ENCODE measurements at regions of chr6 and their contacts with region 1.

Region 1: DNA sequence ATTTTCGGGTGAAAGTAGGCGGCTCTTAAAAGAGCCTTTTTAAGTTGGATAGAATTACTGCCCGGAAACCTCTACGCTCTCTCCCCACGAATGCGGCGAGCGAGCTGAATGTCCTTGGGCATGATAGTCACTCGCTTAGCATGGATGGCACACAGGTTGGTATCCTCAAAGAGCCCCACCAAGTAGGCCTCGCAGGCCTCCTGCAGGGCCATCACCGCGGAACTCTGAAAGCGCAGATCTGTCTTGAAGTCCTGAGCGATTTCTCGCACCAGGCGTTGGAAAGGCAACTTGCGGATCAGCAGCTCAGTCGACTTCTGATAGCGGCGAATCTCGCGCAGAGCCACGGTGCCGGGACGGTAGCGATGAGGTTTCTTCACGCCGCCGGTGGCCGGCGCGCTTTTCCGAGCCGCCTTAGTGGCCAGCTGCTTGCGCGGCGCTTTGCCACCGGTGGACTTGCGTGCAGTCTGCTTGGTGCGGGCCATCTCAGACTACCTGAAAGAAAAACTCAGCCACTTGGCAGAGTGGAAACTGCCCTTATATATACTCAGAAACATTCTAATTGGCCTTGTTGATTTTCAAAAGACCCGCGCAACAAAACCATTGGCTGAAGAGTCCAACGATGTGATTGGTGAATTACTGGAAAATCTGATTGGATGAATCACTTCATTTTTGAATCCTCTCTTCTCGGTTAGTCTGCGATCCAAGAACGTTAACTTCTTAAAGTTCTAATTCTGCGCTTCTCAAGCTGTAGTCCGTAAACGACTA is 93.9 kb upstream of the BTN3A2 start:
- DNase-seq: peak; percentile 87
- H3K4me3 Mint-ChIP-seq: no peak overlapping the region
- H3K27ac Mint-ChIP-seq: no peak overlapping the region
- H3K4me1 Mint-ChIP-seq: peaks cover 35% of the 10 kb centered on the region
- H3K27me3 Mint-ChIP-seq: no peaks in the 10 kb centered on the region

Region 2: DNA sequence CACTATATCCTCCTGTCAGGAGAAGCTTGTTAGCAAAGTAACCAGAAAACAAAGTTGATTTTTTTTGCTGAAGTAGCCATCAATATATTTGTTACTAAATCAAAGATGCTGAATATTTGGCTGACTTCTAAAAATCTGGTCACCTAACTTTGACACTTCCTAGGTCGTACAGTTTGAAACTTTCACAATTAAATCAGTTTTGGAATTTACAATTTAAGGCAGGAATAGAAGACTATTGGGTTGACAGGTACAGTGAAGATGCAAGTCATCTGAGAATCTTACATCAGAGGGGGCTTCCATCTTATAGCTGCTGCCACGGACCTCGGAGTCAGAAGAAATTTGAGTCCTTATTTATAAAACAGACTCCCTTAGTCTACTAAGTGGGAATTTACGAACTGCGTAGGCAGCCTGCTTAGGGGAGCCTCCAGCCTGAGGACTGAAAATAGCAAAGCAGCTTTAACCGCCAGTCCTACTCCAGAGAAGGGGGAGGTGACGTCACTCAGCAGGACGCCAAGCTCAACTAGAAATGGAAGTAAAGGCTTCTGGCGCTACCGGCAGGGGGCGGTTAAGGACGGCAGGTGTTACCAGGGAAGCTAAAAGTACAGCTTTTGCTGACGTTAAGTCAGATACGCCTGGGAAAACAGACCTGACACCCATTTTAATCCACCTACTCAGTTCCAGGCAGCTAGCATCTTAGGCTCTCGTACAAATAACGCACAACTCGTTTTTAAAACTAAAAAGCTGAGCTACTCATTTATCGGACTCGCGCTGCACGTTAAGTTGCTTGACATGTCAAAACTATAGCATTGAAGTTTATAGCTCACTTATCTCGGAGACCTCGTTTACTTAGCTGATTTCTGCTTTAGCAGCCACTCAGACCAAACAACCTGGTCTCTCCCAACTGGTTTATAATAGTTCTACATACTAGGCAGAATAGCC is 244.9 kb before region 1 on chr6:
- CTCF ChIA-PET with region 1: no interaction called
- POLR2A ChIA-PET with region 1: interaction called, 81 read pairs
- DNase-seq: peak; percentile 94
- H3K4me3 Mint-ChIP-seq: peak overlapping the region; percentile 75
- H3K27ac Mint-ChIP-seq: peak overlapping the region; percentile 100
- H3K4me1 Mint-ChIP-seq: peaks cover 84% of the 10 kb centered on the region
- H3K27me3 Mint-ChIP-seq: peaks cover 2% of the 10 kb centered on the region

Region 3: GRCh38 chr6:26122793-26123674 is 148.1 kb before region 1 on chr6:
- CTCF ChIA-PET with region 1: no interaction called
- POLR2A ChIA-PET with region 1: interaction called, 161 read pairs
- DNase-seq: peak; percentile 95
- H3K4me3 Mint-ChIP-seq: peak overlapping the region; percentile 97
- H3K27ac Mint-ChIP-seq: peak overlapping the region; percentile 100
- H3K4me1 Mint-ChIP-seq: peaks cover 40% of the 10 kb centered on the region
- H3K27me3 Mint-ChIP-seq: no peaks in the 10 kb centered on the region

Region 4: DNA sequence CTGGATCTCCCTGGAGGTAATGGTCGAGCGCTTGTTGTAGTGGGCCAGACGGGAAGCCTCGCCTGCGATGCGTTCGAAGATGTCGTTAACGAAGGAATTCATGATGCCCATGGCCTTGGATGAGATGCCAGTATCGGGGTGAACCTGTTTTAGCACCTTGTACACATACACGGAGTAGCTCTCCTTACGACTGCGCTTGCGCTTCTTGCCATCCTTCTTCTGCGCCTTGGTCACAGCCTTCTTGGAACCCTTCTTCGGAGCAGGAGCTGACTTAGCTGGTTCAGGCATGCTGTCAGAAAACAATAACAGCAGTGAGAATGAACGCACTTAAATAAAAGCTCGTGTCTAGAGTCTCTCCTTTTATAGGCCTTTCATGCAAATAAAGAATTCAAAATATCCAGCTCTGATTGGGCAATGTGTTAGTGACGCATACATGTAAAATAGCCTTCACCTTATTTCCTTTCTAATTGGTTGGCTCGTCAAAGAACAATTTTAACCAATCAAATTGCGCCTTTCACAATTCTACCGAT is 54.7 kb before region 1 on chr6:
- CTCF ChIA-PET with region 1: interaction called, 8 read pairs
- POLR2A ChIA-PET with region 1: interaction called, 326 read pairs
- DNase-seq: peak; percentile 90
- H3K4me3 Mint-ChIP-seq: no peak overlapping the region
- H3K27ac Mint-ChIP-seq: no peak overlapping the region
- H3K4me1 Mint-ChIP-seq: peaks cover 28% of the 10 kb centered on the region
- H3K27me3 Mint-ChIP-seq: no peaks in the 10 kb centered on the region

Region 5: GRCh38 chr6:26304797-26305640 is 33.9 kb after region 1 on chr6:
- CTCF ChIA-PET with region 1: interaction called, 4 read pairs
- POLR2A ChIA-PET with region 1: interaction called, 55 read pairs
- DNase-seq: peak; percentile 67
- H3K4me3 Mint-ChIP-seq: peak overlapping the region; percentile 79
- H3K27ac Mint-ChIP-seq: peak overlapping the region; percentile 90
- H3K4me1 Mint-ChIP-seq: peaks cover 49% of the 10 kb centered on the region
- H3K27me3 Mint-ChIP-seq: no peaks in the 10 kb centered on the region

Region 6: DNA sequence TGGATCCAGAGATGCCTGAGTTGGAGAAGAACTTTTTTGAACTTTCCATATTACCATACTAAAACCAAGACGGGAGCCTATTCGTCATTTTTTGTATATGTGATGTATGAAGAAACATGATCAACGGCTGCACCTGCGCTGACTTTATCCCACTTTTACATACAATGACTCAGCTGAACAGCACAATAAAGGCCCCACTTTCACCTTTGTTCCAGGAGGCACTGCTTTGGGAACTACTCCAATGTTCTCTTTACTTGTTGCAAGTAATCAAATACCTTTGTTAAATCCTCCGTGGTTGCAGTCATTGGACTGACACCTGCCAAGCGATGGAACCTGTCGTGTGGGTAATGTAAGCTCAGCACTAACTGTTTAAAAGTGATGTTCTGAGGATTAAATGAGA is 76.6 kb after region 1 on chr6:
- CTCF ChIA-PET with region 1: no interaction called
- POLR2A ChIA-PET with region 1: no interaction called
- DNase-seq: no peak
- H3K4me3 Mint-ChIP-seq: no peak overlapping the region
- H3K27ac Mint-ChIP-seq: no peak overlapping the region
- H3K4me1 Mint-ChIP-seq: peaks cover 5% of the 10 kb centered on the region
- H3K27me3 Mint-ChIP-seq: peaks cover 17% of the 10 kb centered on the region

Region 7: GRCh38 chr6:26363882-26364701 is 93.0 kb after region 1 on chr6:
- CTCF ChIA-PET with region 1: no interaction called
- POLR2A ChIA-PET with region 1: no interaction called
- DNase-seq: no peak
- H3K4me3 Mint-ChIP-seq: no peak overlapping the region
- H3K27ac Mint-ChIP-seq: no peak overlapping the region
- H3K4me1 Mint-ChIP-seq: peaks cover 57% of the 10 kb centered on the region
- H3K27me3 Mint-ChIP-seq: no peaks in the 10 kb centered on the region

Region 8: DNA sequence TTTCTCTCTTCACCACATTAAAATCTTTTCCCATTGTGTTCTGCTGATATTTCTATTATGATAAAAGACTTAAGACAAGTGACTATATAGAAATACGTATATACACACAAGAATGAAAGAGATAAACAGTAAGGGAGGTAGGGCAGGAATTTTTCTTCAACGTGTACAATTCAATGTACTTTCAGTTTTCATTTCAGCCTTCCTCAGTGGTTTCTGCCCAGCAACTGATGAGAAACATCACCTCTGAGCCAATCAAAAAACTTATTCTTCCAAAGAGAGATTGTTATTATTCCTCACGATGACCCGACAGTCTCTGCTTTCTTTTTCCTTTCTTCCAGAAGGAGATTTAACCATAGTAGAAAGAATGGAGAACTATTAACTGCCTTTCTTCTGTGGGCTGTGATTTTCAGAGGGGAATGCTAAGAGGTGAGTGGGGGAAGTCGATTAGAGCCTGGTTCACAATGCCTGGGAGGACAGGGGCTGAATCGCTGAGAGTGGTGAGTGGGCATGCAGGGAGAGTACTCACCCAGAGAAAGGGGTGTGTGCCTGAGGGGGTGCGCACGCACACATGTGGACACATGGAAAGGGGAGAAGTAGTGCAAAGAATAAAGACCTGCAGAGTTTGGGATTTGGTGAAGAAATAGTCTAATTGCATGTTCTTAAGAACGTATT is 131.0 kb after region 1 on chr6 and contains the start of gene BTN3A1:
- CTCF ChIA-PET with region 1: no interaction called
- POLR2A ChIA-PET with region 1: no interaction called
- DNase-seq: peak; percentile 63
- H3K4me3 Mint-ChIP-seq: peak within 1 kb of the TSS; percentile 99
- H3K27ac Mint-ChIP-seq: peak within 1 kb of the TSS; percentile 86
- H3K4me1 Mint-ChIP-seq: peaks cover 47% of the 10 kb centered on the region
- H3K27me3 Mint-ChIP-seq: no peaks in the 10 kb centered on the region
- total RNA-seq, gene BTN3A1: 100 to 103 TPM

Region 9: GRCh38 chr6:26464416-26465131 is 193.5 kb after region 1 on chr6:
- CTCF ChIA-PET with region 1: no interaction called
- POLR2A ChIA-PET with region 1: no interaction called
- DNase-seq: no peak
- H3K4me3 Mint-ChIP-seq: no peak overlapping the region
- H3K27ac Mint-ChIP-seq: peak overlapping the region; percentile 0
- H3K4me1 Mint-ChIP-seq: peaks cover 45% of the 10 kb centered on the region
- H3K27me3 Mint-ChIP-seq: no peaks in the 10 kb centered on the region

Region 10: DNA sequence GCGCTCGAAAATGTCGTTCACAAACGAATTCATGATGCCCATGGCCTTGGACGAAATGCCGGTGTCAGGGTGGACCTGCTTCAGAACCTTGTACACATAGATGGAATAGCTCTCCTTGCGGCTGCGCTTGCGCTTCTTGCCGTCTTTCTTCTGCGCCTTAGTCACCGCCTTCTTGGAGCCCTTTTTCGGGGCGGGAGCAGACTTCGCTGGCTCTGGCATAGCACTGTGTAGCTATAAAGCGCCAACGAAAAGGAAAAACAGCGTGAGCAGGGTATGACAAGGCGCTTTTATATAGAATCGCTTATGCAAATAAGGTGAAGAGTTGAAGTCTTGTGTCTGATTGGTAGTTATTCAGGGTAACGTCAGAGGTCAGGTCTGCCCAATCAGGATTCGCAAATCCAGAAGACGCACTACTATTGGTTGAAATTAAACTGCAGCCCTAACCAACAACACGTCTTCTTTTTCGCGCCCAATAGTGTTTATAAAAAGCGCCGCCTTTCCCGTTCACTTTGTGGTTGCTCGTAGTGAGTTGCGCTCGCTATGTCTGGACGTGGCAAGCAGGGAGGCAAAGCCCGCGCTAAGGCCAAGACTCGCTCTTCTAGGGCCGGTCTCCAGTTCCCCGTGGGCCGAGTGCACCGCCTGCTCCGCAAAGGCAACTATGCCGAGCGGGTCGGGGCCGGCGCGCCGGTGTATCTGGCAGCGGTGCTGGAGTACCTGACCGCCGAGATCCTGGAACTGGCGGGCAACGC is 861.6 kb after region 1 on chr6:
- CTCF ChIA-PET with region 1: no interaction called
- POLR2A ChIA-PET with region 1: interaction called, 139 read pairs
- DNase-seq: peak; percentile 95
- H3K4me3 Mint-ChIP-seq: no peak overlapping the region
- H3K27ac Mint-ChIP-seq: no peak overlapping the region
- H3K4me1 Mint-ChIP-seq: peaks cover 60% of the 10 kb centered on the region
- H3K27me3 Mint-ChIP-seq: no peaks in the 10 kb centered on the region

Region 11: GRCh38 chr6:27871924-27872638 is 1601.0 kb after region 1 on chr6:
- CTCF ChIA-PET with region 1: no interaction called
- POLR2A ChIA-PET with region 1: interaction called, 61 read pairs
- DNase-seq: peak; percentile 87
- H3K4me3 Mint-ChIP-seq: peak overlapping the region; percentile 81
- H3K27ac Mint-ChIP-seq: peak overlapping the region; percentile 99
- H3K4me1 Mint-ChIP-seq: peaks cover 60% of the 10 kb centered on the region
- H3K27me3 Mint-ChIP-seq: no peaks in the 10 kb centered on the region